ENCODE measurements at regions of chr10 and their contacts with region 1.

Region 1: DNA sequence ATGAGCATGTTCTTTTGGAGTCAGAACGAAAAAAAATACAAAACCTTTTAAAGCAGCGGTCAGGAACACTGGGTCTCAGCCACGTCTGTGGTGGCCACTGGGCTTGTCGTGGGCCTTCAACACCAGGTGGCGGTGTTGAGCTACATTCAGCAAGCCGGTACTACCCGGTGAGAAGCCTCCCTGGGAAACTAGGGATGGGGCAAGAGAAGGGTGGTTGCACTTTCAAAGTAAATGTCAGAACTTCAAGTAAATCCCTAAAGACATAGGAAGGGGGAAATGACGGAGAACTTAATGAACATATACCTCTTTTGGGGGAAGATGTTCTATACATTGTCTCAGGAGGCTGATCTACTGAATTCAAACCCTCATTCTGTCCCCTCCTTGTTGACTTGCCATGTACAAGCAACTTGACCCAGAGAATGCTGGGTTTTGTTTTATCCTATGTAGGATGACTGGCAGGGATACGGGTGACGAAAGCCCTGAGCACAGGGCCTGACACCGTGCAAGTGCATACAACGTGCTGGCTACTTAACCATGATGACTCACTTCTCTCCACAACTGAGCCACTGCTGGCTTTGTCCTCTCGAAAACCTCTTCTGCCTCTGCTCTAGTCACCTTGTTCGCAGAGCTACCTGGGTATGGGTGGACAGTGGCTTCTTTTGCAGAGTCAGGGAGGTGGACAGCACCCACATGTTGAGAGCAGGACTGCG is 49.0 kb upstream of the BAMBI start:
- DNase-seq: peak; percentile 75
- H3K4me3 ChIP-seq: no peak overlapping the region
- H3K27ac ChIP-seq: no peak overlapping the region
- H3K4me1 ChIP-seq: peaks cover 7% of the 10 kb centered on the region
- H3K27me3 ChIP-seq: peaks cover 12% of the 10 kb centered on the region
- CTCF ChIP-seq: peak; percentile 89

Region 2: GRCh38 chr10:29304264-29305030 is 676.1 kb after region 1 on chr10:
- intact Hi-C with region 1: loop called (anchors 5 kb)
- DNase-seq: peak; percentile 26
- H3K4me3 ChIP-seq: peak overlapping the region; percentile 19
- H3K27ac ChIP-seq: peak overlapping the region; percentile 22
- H3K4me1 ChIP-seq: peaks cover 12% of the 10 kb centered on the region
- H3K27me3 ChIP-seq: no peaks in the 10 kb centered on the region
- CTCF ChIP-seq: peak; percentile 87

Measured in left ventricle myocardium inferior (tissue), 1 donor.